Esophagus squamous epithelium (tissue), 5 donors: ENCODE measurements at regions of chr12 and their contacts with region 1.

Region 1: GRCh38 chr12:14332482-14332881 is 33.0 kb upstream of the ATF7IP start:
- DNase-seq: no peak
- H3K4me3 ChIP-seq: no peak overlapping the region
- H3K27ac ChIP-seq: no peak overlapping the region
- H3K4me1 ChIP-seq: peaks cover 0 to 10% (median 3%) of the 10 kb centered on the region in 3 donors
- H3K27me3 ChIP-seq: no peaks in the 10 kb centered on the region
- CTCF ChIP-seq: no peak
- POLR2A ChIP-seq: no peak

Region 2: GRCh38 chr12:14138495-14138894 is 194.0 kb before region 1 on chr12:
- intact Hi-C with region 1: no loop called
- DNase-seq: no peak
- H3K4me3 ChIP-seq: no peak overlapping the region
- H3K27ac ChIP-seq: no peak overlapping the region
- H3K4me1 ChIP-seq: no peaks in the 10 kb centered on the region
- H3K27me3 ChIP-seq: no peaks in the 10 kb centered on the region
- CTCF ChIP-seq: no peak
- POLR2A ChIP-seq: no peak

Region 3: GRCh38 chr12:14272956-14273907 is 59.2 kb before region 1 on chr12:
- intact Hi-C with region 1: no loop called
- DNase-seq: no peak
- H3K4me3 ChIP-seq: peak overlapping the region in 1 of 4 donors; percentile 40
- H3K27ac ChIP-seq: peak overlapping the region; percentile 78 to 87 (median 83)
- H3K4me1 ChIP-seq: peaks cover 0 to 29% (median 12%) of the 10 kb centered on the region in 3 donors
- H3K27me3 ChIP-seq: no peaks in the 10 kb centered on the region
- CTCF ChIP-seq: peak in 1 of 6 experiments; percentile 5
- POLR2A ChIP-seq: no peak

Region 4: GRCh38 chr12:14310866-14311265 is 21.6 kb before region 1 on chr12:
- intact Hi-C with region 1: loop called (anchors 2 kb)
- DNase-seq: no peak
- H3K4me3 ChIP-seq: no peak overlapping the region
- H3K27ac ChIP-seq: no peak overlapping the region
- H3K4me1 ChIP-seq: peaks cover 0 to 4% (median 0%) of the 10 kb centered on the region in 3 donors
- H3K27me3 ChIP-seq: no peaks in the 10 kb centered on the region
- CTCF ChIP-seq: no peak
- POLR2A ChIP-seq: no peak

Region 5: GRCh38 chr12:14422516-14423230 is 90.2 kb after region 1 on chr12:
- intact Hi-C with region 1: no loop called
- DNase-seq: no peak
- H3K4me3 ChIP-seq: no peak overlapping the region
- H3K27ac ChIP-seq: peak overlapping the region in 1 of 4 donors; percentile 31
- H3K4me1 ChIP-seq: peaks cover 0 to 32% (median 0%) of the 10 kb centered on the region in 3 donors
- H3K27me3 ChIP-seq: no peaks in the 10 kb centered on the region
- CTCF ChIP-seq: no peak
- POLR2A ChIP-seq: no peak